ENCODE measurements at regions of chr1 and their contacts with region 1.

Region 1: DNA sequence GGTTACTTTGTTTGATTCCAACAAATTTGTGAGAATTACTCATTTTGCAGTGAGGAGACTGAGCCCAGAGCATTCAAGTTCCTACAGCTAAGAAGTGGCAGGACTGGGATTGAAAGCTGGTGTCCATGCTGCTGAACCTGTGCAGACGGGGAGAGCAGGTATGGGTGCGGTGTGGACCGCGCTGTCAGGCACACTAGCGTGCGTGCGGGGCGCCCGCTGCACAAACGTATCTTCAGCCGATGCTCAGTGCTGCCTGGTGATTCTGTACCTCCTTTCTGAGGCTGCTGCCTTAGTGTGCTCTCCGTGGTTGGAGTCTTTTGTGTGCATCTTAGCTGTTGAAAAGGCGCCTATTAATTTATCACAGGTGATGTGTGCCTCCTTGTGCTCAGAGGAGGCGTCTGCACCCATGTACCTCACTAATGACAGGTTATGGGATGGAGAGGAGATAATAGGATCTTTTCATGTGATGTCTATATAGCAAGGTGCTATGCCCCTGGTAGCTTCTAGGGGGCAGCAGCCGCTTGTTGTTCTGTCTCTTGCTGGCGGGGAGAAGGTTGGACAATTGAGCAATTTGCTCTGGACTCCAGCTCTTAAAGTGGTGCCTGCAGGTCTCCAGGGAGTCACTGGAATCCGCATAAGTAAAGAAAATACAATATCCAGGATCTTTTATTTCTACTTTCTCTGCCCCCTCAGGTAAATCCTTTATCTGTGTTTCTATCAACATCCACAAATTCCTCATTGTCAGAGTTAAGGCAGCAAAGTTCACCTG is 32.5 kb downstream of the PEX14 start:
- DNase-seq: peak in 1 of 2 donors; percentile 84
- H3K4me3 ChIP-seq: peak overlapping the region in 1 of 2 donors; percentile 14
- H3K27ac ChIP-seq: no peak overlapping the region
- H3K4me1 ChIP-seq: peaks cover 13 to 16% of the 10 kb centered on the region in 2 donors
- H3K27me3 ChIP-seq: no peaks in the 10 kb centered on the region
- CTCF ChIP-seq: peak; percentile 76 to 94 (median 85)

Region 2: GRCh38 chr1:10530281-10530740 is 23.0 kb after region 1 on chr1:
- intact Hi-C with region 1: loop called (anchors 2 kb)
- DNase-seq: peak in 1 of 2 donors; percentile 66
- H3K4me3 ChIP-seq: peak overlapping the region in 1 of 2 donors; percentile 33
- H3K27ac ChIP-seq: peak overlapping the region; percentile 31 to 74
- H3K4me1 ChIP-seq: peaks cover 10 to 26% of the 10 kb centered on the region in 2 donors
- H3K27me3 ChIP-seq: no peaks in the 10 kb centered on the region
- CTCF ChIP-seq: peak; percentile 51 to 67 (median 60)

Region 3: GRCh38 chr1:10635085-10635896 is 128.0 kb after region 1 on chr1:
- intact Hi-C with region 1: loop called (anchors 5 kb)
- DNase-seq: peak in 1 of 2 donors; percentile 83
- H3K4me3 ChIP-seq: peak overlapping the region in 1 of 2 donors; percentile 18
- H3K27ac ChIP-seq: peak overlapping the region; percentile 97 to 99
- H3K4me1 ChIP-seq: peaks cover 35 to 65% of the 10 kb centered on the region in 2 donors
- H3K27me3 ChIP-seq: no peaks in the 10 kb centered on the region
- CTCF ChIP-seq: no peak

Region 4: DNA sequence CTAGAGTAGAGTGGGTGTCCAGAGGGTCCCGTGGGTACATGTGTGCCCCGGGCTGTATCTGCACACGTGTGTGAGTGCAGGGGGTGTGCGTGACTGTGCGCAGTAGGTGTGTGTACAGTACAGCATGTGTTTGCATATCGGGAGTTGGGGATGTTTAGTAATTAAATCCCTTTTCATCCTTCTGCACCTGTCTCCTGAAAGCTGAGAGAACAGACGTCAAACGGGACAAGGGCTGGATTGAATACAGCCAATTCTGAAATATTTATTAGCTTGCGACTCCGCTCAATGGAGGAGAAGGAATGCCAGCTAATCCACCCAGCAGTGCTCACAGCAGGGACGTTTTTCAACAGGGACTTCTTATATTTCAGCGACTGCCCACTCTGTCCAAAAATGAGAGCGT is 333.8 kb after region 1 on chr1:
- intact Hi-C with region 1: no loop called
- DNase-seq: no peak
- H3K4me3 ChIP-seq: no peak overlapping the region
- H3K27ac ChIP-seq: no peak overlapping the region
- H3K4me1 ChIP-seq: no peaks in the 10 kb centered on the region
- H3K27me3 ChIP-seq: no peaks in the 10 kb centered on the region
- CTCF ChIP-seq: no peak

Region 5: DNA sequence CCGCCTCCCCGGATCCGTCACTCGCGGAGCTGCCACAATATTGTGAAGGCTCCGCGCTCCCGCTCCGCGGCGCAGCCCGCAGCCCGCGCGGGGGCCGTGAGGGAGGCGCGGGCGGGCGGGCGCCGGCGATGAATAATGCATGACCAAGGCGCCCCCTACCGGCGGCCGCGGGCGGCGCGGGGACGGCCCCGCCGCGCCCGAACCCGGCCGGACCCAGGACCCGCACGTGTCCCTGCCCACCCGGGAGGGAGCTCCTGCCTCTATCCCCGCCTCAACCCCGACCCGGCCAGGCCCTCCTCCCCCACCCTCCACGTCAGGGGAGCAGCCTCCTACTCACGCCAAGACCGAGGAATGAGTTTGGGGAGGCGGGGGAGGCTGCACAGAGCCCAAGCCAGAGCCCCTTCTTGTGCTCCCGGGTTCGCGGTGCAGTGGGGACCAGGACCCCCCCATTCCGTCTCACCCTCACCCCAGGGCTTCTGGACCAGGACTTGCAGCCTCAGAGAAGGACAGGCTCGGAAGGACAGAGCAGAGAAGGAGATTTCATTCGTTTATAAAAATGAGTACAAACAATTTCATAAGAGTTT is 359.9 kb after region 1 on chr1:
- intact Hi-C with region 1: loop called (anchors 1 kb)
- DNase-seq: peak in 1 of 2 donors; percentile 75
- H3K4me3 ChIP-seq: peak overlapping the region; percentile 54 to 72
- H3K27ac ChIP-seq: no peak overlapping the region
- H3K4me1 ChIP-seq: peaks cover 4% of the 10 kb centered on the region in 2 donors
- H3K27me3 ChIP-seq: peaks cover 4% of the 10 kb centered on the region
- CTCF ChIP-seq: peak; percentile 14 to 93 (median 46)

Region 6: GRCh38 chr1:10941891-10942541 is 434.7 kb after region 1 on chr1:
- intact Hi-C with region 1: loop called (anchors 5 kb)
- DNase-seq: no peak
- H3K4me3 ChIP-seq: no peak overlapping the region
- H3K27ac ChIP-seq: no peak overlapping the region
- H3K4me1 ChIP-seq: peaks cover 0 to 4% of the 10 kb centered on the region in 2 donors
- H3K27me3 ChIP-seq: peaks cover 3% of the 10 kb centered on the region
- CTCF ChIP-seq: peak; percentile 53 to 91 (median 86)

Measured in ascending aorta (tissue), 2 donors.